Activated B cell treated with CpG ODN at 0.5 μM for 24 hours (primary cell): ENCODE measurements at regions of chr17 and their contacts with region 1.

Region 1: GRCh38 chr17:45794840-45795239 is 10.7 kb downstream of the CRHR1 start:
- DNase-seq: no peak
- ATAC-seq: no peak
- H3K4me3 Mint-ChIP-seq: no peak overlapping the region
- H3K27ac Mint-ChIP-seq: no peak overlapping the region
- H3K4me1 Mint-ChIP-seq: peaks cover 2% of the 10 kb centered on the region
- H3K27me3 Mint-ChIP-seq: peaks cover 44% of the 10 kb centered on the region
- CTCF ChIP-seq: no peak

Region 2: GRCh38 chr17:45759761-45760160 is 35.1 kb before region 1 on chr17:
- CTCF ChIA-PET with region 1: no interaction called
- POLR2A ChIA-PET with region 1: no interaction called
- intact Hi-C with region 1: no loop called
- DNase-seq: no peak
- ATAC-seq: no peak
- H3K4me3 Mint-ChIP-seq: no peak overlapping the region
- H3K27ac Mint-ChIP-seq: no peak overlapping the region
- H3K4me1 Mint-ChIP-seq: no peaks in the 10 kb centered on the region
- H3K27me3 Mint-ChIP-seq: peaks cover 20% of the 10 kb centered on the region
- CTCF ChIP-seq: no peak

Region 3: DNA sequence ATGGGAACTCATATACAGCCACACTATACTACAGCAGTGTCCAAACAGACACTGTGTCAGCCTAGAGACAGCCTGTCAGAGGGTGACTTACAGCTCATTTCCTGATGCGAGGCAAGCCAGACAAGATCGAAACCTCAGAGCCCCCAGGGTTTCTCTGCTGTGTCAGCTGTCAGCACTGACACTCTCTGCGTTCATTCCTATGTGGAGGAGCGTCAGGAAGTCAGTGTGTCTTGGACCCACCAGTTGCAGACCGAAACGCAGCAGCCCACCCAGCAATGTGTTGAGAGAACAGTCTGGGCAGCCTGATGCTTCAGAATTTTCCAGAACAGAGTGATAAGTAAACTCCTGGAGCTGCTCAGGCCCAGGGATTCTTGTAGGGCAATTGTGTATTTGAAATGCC is 78.9 kb after region 1 on chr17:
- CTCF ChIA-PET with region 1: no interaction called
- POLR2A ChIA-PET with region 1: interaction called, 12 read pairs
- intact Hi-C with region 1: no loop called
- DNase-seq: no peak
- ATAC-seq: peak; percentile 47
- H3K4me3 Mint-ChIP-seq: no peak overlapping the region
- H3K27ac Mint-ChIP-seq: no peak overlapping the region
- H3K4me1 Mint-ChIP-seq: peaks cover 4% of the 10 kb centered on the region
- H3K27me3 Mint-ChIP-seq: peaks cover 12% of the 10 kb centered on the region
- CTCF ChIP-seq: no peak

Region 4: DNA sequence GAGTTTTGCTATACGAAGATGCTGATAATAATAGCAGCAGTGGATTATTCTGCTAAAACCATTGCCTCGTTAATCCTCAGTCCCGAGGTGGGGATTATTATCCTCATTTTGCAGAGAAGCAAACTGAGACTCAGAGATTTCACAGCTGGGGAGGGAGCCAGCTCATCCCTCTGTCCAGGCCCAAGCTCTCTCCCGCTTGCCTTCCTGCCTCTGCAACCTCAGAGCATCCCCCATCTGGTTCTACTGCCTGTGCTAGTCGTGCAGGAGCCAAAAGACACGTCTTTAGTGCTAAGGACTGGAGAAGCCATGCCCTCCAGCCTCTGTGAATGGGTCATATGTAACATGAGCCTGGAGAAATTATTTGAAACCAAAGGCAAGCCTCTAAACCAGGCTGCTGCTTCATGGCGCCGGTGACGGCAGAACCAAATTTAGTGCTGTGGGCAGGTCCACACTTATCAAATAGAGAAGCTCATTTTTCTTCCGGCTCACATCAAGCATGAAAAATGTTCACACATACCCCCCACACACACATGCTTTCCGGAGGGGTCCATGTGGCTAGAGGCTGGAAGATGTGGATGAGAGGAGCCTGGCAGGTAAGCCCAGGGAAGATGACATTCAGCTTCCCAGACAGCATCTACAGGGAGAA is 113.0 kb after region 1 on chr17:
- CTCF ChIA-PET with region 1: no interaction called
- POLR2A ChIA-PET with region 1: no interaction called
- intact Hi-C with region 1: no loop called
- DNase-seq: no peak
- ATAC-seq: no peak
- H3K4me3 Mint-ChIP-seq: no peak overlapping the region
- H3K27ac Mint-ChIP-seq: no peak overlapping the region
- H3K4me1 Mint-ChIP-seq: no peaks in the 10 kb centered on the region
- H3K27me3 Mint-ChIP-seq: peaks cover 29% of the 10 kb centered on the region
- CTCF ChIP-seq: no peak